Prostate gland (tissue), 2 donors: ENCODE measurements at regions of chr7 and their contacts with region 1.

Region 1: GRCh38 chr7:116588641-116589594 is 64.1 kb downstream of the CAV1 start:
- DNase-seq: peak; percentile 33
- H3K4me3 ChIP-seq: no peak overlapping the region
- H3K27ac ChIP-seq: no peak overlapping the region
- H3K4me1 ChIP-seq: no peaks in the 10 kb centered on the region
- H3K27me3 ChIP-seq: no peaks in the 10 kb centered on the region
- CTCF ChIP-seq: peak; percentile 61 to 88 (median 78)
- POLR2A ChIP-seq: no peak

Region 2: DNA sequence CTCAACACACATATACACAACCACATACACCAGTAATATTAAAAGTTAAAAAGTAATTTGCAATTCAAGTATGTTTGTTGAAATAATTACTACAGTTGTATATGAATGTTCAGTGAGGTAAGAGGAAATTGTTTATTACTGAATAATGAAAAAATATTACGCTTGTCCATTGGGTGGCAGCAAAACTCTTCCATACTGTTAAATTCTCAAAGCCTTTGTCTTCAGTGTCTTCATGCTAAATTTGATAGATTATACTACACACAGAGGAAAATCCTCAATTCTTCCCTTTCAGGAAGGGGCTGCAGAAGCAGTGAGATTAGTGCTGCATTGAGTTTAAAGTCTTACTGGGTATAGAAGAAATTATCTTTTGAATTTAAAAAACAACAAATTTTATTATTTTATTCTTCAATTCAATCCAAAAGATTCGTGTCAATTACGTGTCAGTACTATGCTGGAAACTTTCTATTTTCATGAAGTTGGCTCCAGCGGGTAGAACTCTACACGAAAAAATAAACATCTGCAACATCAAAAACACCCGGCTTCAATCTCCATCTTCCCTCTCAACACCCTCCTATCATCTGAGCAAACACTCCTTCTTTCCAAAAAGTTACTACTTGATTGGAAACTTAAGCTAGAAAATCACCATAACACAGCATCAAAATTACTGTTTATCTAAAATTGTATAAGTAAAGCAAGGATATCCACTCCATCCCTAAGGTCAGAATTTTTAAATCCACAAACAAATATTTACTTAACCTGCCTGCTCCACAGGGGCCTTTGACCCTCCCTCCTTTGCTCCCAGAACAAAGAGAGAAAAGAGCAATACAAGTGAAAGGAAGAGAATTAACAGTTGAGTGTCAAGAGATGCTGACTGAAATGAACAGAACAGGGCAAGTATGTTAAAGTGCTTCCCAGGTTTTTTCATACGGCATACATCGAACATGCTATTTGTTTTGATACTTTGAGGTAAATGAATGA is 415.6 kb before region 1 on chr7:
- intact Hi-C with region 1: loop called (anchors 5 kb)
- DNase-seq: peak; percentile 30
- H3K4me3 ChIP-seq: no peak overlapping the region
- H3K27ac ChIP-seq: no peak overlapping the region
- H3K4me1 ChIP-seq: no peaks in the 10 kb centered on the region
- H3K27me3 ChIP-seq: no peaks in the 10 kb centered on the region
- CTCF ChIP-seq: peak; percentile 17 to 80 (median 57)
- POLR2A ChIP-seq: no peak

Region 3: GRCh38 chr7:116258734-116259133 is 330.2 kb before region 1 on chr7:
- intact Hi-C with region 1: loop called (anchors 2 kb)
- DNase-seq: peak; percentile 23
- H3K4me3 ChIP-seq: no peak overlapping the region
- H3K27ac ChIP-seq: no peak overlapping the region
- H3K4me1 ChIP-seq: no peaks in the 10 kb centered on the region
- H3K27me3 ChIP-seq: no peaks in the 10 kb centered on the region
- CTCF ChIP-seq: peak; percentile 31 to 90 (median 84)
- POLR2A ChIP-seq: no peak

Region 4: GRCh38 chr7:116443101-116443523 is 145.8 kb before region 1 on chr7:
- intact Hi-C with region 1: loop called (anchors 10 kb)
- DNase-seq: no peak
- H3K4me3 ChIP-seq: no peak overlapping the region
- H3K27ac ChIP-seq: no peak overlapping the region
- H3K4me1 ChIP-seq: no peaks in the 10 kb centered on the region
- H3K27me3 ChIP-seq: no peaks in the 10 kb centered on the region
- CTCF ChIP-seq: no peak
- POLR2A ChIP-seq: no peak

Region 5: GRCh38 chr7:116525913-116526861 is 62.7 kb before region 1 on chr7:
- intact Hi-C with region 1: loop called (anchors 5 kb)
- DNase-seq: peak; percentile 62
- H3K4me3 ChIP-seq: peak overlapping the region; percentile 49 to 51
- H3K27ac ChIP-seq: peak overlapping the region; percentile 81 to 83
- H3K4me1 ChIP-seq: no peaks in the 10 kb centered on the region
- H3K27me3 ChIP-seq: no peaks in the 10 kb centered on the region
- CTCF ChIP-seq: peak; percentile 70 to 91 (median 82)
- POLR2A ChIP-seq: peak; percentile 25

Region 6: DNA sequence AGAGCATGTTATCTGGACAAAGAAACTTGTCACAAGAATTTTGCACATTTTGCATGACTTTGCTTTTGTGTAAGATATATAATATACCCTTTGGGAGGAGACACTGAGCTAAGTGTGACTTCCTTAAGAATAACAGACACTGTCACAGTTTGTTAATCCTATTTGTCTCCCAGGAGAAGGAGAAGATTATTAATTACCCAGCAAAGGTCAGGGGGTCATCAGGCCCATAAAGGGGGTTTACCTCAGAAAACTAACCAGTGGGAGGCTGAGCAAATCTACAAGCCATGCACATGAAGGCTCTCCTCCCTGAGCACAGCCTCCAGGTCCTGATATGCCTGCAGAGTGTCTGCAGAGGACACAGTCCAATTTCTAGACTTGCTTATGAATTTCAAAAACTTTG is 72.9 kb after region 1 on chr7:
- intact Hi-C with region 1: no loop called
- DNase-seq: no peak
- H3K4me3 ChIP-seq: no peak overlapping the region
- H3K27ac ChIP-seq: no peak overlapping the region
- H3K4me1 ChIP-seq: no peaks in the 10 kb centered on the region
- H3K27me3 ChIP-seq: no peaks in the 10 kb centered on the region
- CTCF ChIP-seq: no peak
- POLR2A ChIP-seq: no peak

Region 7: GRCh38 chr7:116671681-116672595 is 83.0 kb after region 1 on chr7 and contains the start of gene MET:
- intact Hi-C with region 1: loop called (anchors 2 kb)
- DNase-seq: peak; percentile 82
- H3K4me3 ChIP-seq: peak within 1 kb of the TSS; percentile 46 to 50
- H3K27ac ChIP-seq: peak within 1 kb of the TSS; percentile 68 to 73
- H3K4me1 ChIP-seq: no peaks in the 10 kb centered on the region
- H3K27me3 ChIP-seq: no peaks in the 10 kb centered on the region
- CTCF ChIP-seq: peak; percentile 17 to 83 (median 58)
- POLR2A ChIP-seq: peak; percentile 68
- total RNA-seq, gene MET: 14.2 to 17.0 TPM

Region 8: DNA sequence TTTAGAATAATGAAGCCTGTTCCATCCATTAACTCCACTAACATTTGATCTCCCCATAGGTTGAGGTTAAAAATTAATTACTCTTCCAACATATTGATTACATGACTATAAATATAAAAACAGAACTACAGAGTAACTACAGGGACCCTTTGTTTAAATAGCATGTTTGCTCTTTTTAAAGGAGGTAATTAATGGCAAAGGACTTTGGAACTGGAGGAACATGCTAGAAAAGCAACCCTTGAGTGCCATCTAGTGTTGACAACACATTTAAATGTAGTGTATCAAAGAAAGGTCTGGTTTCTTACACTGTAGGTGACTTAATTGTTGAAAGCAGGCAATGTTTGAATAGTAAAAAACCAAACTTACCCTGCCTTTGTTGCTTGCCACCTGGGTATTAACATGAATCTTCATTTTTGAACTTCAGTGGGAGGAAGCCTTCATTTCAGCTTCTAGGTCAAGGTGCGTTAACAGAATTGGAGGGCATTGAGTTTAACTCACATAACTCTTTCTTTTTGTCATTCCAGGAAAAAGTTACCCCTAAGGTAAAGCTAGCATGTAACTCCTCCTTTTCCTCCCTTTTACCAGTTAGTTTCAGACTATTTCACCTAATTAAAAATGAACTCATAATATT is 220.8 kb after region 1 on chr7:
- intact Hi-C with region 1: loop called (anchors 2 kb)
- DNase-seq: peak; percentile 54
- H3K4me3 ChIP-seq: no peak overlapping the region
- H3K27ac ChIP-seq: no peak overlapping the region
- H3K4me1 ChIP-seq: no peaks in the 10 kb centered on the region
- H3K27me3 ChIP-seq: no peaks in the 10 kb centered on the region
- CTCF ChIP-seq: peak; percentile 34 to 83 (median 72)
- POLR2A ChIP-seq: no peak